Activated CD4-positive, alpha-beta T cell treated with anti-CD3 and anti-CD28 coated beads, Interleukin-2, amount 10 ng/mL, durations not matched to agents 7 days and 5 days (primary cell): ENCODE measurements at regions of chr11 and their contacts with region 1.

Region 1: GRCh38 chr11:107689317-107690202 is 22.3 kb downstream of the SLN start:
- DNase-seq: peak; percentile 72
- H3K4me3 Mint-ChIP-seq: no peak overlapping the region
- H3K27ac Mint-ChIP-seq: no peak overlapping the region
- H3K4me1 Mint-ChIP-seq: peaks cover 4% of the 10 kb centered on the region
- H3K27me3 Mint-ChIP-seq: peaks cover 19% of the 10 kb centered on the region

Region 2: DNA sequence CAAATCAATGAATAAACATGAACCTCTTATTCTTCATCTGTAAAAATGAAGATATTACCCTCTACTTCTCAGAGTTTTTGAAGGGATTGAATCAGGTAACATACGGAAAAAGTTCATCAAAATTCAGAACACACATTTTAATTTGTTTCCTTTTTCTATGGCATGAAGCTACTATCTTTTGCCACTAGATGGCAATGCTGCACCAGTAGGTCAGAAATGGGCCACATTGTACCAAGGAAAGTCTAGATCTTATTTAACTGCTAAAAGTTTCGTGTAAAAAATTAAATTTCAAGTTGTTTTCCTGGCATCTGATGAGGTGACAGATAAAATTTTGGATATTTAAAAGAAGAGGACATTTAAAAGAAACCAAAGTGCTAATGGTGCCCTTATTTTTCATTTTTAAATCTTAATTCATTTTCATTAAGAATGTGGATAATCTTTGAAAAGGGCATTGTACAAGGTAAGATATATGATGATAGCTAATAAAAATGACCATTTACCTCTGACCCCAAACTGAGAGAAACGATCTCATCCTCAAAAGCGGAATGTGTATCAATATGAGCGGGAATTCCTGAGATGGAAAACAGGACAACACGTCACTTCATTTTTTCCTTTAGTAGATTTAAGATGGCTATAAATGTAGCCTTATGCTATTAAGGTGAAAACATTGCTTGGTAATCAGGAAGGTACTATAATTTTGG is 140.2 kb before region 1 on chr11:
- CTCF ChIA-PET with region 1: interaction called, 10 read pairs
- POLR2A ChIA-PET with region 1: no interaction called
- DNase-seq: peak; percentile 44
- H3K4me3 Mint-ChIP-seq: no peak overlapping the region
- H3K27ac Mint-ChIP-seq: no peak overlapping the region
- H3K4me1 Mint-ChIP-seq: no peaks in the 10 kb centered on the region
- H3K27me3 Mint-ChIP-seq: no peaks in the 10 kb centered on the region

Region 3: DNA sequence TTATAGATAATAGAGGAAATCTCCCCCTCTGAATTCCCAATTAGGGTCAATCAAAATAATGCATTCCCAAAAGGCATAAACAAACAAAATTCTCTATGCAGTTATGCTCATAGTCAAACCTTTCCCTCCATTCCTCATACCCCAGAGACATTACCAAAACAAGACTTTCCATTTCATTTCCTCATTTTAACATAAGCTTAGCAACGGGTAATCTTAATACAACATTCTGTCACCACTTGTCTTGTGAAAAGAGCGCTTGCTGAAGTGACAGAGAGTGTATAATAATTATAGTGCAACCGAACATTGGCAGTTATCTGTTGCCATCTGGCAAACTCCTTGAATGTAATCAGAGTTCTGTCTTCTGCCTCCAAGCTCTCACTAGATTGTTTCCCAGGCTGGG is 23.4 kb after region 1 on chr11:
- CTCF ChIA-PET with region 1: no interaction called
- POLR2A ChIA-PET with region 1: no interaction called
- DNase-seq: no peak
- H3K4me3 Mint-ChIP-seq: no peak overlapping the region
- H3K27ac Mint-ChIP-seq: no peak overlapping the region
- H3K4me1 Mint-ChIP-seq: no peaks in the 10 kb centered on the region
- H3K27me3 Mint-ChIP-seq: peaks cover 27% of the 10 kb centered on the region